ENCODE measurements at regions of chr2 and their contacts with region 1.

Region 1: DNA sequence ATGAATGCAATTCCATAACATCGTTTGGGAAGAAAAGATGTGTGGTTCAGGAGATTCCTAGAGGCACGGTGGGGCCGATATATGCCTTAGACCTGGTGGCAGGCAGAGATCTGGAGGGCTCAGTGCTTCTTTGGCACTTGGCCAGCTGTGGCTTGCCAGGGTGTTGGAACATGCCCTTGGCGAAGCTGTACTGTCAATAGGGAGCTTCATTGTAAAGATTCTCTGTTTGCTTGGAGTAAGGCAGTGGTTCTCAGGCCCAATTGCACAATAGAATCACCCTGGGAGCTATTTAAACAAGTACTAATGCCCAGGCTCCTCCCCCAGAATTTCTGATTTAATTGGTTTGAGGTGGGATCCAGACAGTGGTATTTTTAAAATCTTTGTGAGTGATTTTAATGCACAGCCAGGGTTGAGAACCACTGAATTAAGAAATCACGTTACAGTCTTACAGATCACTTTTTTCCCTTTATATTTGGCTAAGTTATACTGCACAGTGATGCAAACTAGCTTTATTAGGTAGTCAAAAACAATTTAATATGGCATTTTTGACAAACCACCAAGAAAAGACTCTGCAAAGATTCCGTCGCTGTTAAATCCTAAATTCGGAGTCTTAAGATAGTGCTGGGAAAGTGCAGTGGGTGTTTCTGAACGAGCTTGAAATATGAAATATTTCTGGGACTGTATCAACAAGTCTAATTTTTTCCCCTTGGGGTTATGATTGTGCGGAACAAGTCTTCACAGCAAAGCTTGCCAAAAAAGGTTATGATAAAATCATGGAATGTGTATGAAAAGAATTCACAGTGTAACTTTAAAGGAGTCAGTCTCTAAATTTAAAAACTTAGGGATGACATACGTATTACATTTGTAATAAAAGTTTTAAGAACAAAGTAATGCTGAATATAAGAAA is 78.0 kb downstream of the CRIM1 start:
- DNase-seq: peak in 1 of 2 donors; percentile 45
- H3K4me3 ChIP-seq: peak overlapping the region in 1 of 2 donors; percentile 35
- H3K27ac ChIP-seq: peak overlapping the region; percentile 79 to 83
- H3K4me1 ChIP-seq: peaks cover 0 to 98% (median 67%) of the 10 kb centered on the region in 4 donors
- H3K27me3 ChIP-seq: no peaks in the 10 kb centered on the region
- CTCF ChIP-seq: no peak

Region 2: DNA sequence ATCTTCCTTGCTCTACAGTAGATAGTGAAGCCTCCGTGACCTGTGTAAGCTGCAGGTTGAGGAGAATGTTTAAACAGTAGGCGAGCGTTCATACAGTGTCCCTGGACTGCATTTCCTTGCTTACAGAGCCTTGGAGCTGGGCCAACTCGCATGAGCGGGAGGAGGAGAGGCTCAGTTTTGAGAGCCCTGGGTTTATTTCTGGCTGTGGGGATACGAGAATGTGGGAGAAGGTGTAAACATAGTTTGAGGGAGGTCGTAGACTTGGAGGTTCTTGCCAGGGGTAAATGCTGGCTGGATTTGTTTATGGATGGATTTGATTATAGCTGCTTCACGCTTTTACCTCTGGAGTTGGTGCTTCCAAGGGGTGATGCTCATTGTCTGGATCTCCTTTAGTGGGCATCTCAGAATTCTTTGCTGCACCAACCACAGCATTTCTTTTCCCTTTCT is 57.2 kb before region 1 on chr2:
- intact Hi-C with region 1: loop called (anchors 10 kb)
- DNase-seq: peak; percentile 80 to 87
- H3K4me3 ChIP-seq: peak overlapping the region in 1 of 2 donors; percentile 1
- H3K27ac ChIP-seq: peak overlapping the region; percentile 45 to 74
- H3K4me1 ChIP-seq: peaks cover 0 to 100% (median 71%) of the 10 kb centered on the region in 4 donors
- H3K27me3 ChIP-seq: no peaks in the 10 kb centered on the region
- CTCF ChIP-seq: no peak

Region 3: GRCh38 chr2:36403675-36404230 is 29.8 kb before region 1 on chr2:
- intact Hi-C with region 1: no loop called
- DNase-seq: no peak
- H3K4me3 ChIP-seq: no peak overlapping the region
- H3K27ac ChIP-seq: peak overlapping the region; percentile 68 to 74
- H3K4me1 ChIP-seq: peaks cover 0 to 100% (median 56%) of the 10 kb centered on the region in 4 donors
- H3K27me3 ChIP-seq: no peaks in the 10 kb centered on the region
- CTCF ChIP-seq: no peak

Region 4: DNA sequence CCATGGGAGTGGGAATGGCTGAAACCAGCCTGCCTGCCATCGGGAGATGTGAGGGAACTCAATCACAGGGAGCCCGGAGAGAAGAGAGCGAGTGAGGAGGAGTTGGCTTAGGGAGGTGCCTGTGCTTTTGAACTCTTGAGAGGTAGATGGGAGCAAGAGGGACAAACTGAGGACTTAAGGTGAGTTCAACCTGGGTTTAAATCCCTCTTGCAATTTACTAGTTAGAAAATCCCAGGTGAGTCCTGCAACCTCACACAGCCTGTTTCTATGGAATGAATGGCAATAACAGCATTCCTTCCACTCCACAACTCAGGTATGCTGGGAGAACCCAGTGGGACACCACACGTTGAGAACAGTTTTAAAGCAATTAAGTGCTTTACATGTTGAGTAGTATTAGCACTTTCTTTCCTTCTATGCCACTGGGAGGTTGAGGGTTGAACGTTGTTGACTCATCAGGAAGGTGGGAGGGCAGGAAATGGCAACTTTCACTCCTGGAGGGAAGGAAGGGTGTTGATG is 320.2 kb after region 1 on chr2:
- intact Hi-C with region 1: no loop called
- DNase-seq: no peak
- H3K4me3 ChIP-seq: no peak overlapping the region
- H3K27ac ChIP-seq: no peak overlapping the region
- H3K4me1 ChIP-seq: no peaks in the 10 kb centered on the region
- H3K27me3 ChIP-seq: peaks cover 0 to 20% of the 10 kb centered on the region in 2 donors
- CTCF ChIP-seq: no peak

Region 5: DNA sequence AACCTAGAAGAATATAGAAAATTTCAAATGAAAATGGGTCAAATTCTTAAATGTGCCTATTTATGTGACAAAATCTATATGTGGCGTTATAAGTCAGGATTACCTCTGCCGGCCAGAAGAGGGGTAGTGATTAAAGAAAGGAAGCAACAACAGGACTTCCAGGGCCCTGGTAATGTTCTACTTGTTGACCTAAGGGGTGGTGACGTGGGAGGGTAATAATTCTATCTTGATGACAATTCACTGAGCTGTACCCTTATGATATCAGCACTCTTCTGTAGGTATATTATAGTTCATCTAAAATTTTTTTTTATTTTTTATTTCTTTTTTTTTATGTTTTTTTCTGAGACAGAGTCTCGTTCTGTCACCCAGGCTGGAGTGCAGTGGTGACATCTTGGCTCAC is 444.9 kb after region 1 on chr2:
- intact Hi-C with region 1: no loop called
- DNase-seq: no peak
- H3K4me3 ChIP-seq: no peak overlapping the region
- H3K27ac ChIP-seq: no peak overlapping the region
- H3K4me1 ChIP-seq: no peaks in the 10 kb centered on the region
- H3K27me3 ChIP-seq: no peaks in the 10 kb centered on the region
- CTCF ChIP-seq: no peak

Measured in tibial artery (tissue), 4 donors.